MCF 10A (cell line): ENCODE measurements at regions of chr3 and their contacts with region 1.

Region 1: DNA sequence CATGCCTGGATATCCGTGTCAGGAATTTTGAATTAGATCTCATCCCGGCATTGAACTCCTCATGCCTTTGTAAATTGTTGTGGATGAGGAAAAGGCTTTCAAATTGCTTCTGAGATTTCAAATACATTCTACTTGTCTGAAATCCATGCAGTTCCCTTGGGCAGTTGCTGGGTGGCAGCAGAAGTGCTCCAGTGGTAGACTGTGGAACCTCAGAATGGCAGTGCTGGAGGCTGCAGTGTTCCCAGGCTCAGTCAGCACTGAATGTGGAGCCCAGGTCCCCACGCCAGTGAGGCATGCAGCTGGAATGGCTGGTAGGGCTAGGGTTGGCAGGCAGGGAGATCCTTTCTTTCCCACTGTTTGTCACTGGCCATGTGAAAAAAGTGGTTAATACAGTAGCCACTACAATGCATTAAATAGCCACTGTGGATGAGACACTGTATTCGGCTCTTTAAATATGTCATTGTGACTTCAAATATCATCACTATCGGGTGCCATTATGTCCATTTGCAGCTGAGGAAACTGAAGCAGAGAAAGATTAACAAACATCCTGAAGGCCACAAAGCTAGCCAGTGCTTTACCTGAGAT is 98.6 kb downstream of the TPRG1 start:
- DNase-seq: peak; percentile 88
- H3K4me3 Mint-ChIP-seq: no peak overlapping the region
- H3K27ac Mint-ChIP-seq: peak overlapping the region; percentile 87
- H3K4me1 Mint-ChIP-seq: peaks cover 56% of the 10 kb centered on the region
- H3K27me3 Mint-ChIP-seq: no peaks in the 10 kb centered on the region
- CTCF ChIP-seq: peak; percentile 85

Region 2: GRCh38 chr3:188164248-188164687 is 1106.1 kb before region 1 on chr3:
- CTCF ChIA-PET with region 1: no interaction called
- POLR2A ChIA-PET with region 1: no interaction called
- intact Hi-C with region 1: no loop called
- DNase-seq: peak; percentile 50
- H3K4me3 Mint-ChIP-seq: no peak overlapping the region
- H3K27ac Mint-ChIP-seq: no peak overlapping the region
- H3K4me1 Mint-ChIP-seq: peaks cover 28% of the 10 kb centered on the region
- H3K27me3 Mint-ChIP-seq: no peaks in the 10 kb centered on the region
- CTCF ChIP-seq: no peak

Region 3: GRCh38 chr3:189123595-189124387 is 146.5 kb before region 1 on chr3:
- CTCF ChIA-PET with region 1: no interaction called
- POLR2A ChIA-PET with region 1: no interaction called
- intact Hi-C with region 1: no loop called
- DNase-seq: no peak
- H3K4me3 Mint-ChIP-seq: no peak overlapping the region
- H3K27ac Mint-ChIP-seq: no peak overlapping the region
- H3K4me1 Mint-ChIP-seq: no peaks in the 10 kb centered on the region
- H3K27me3 Mint-ChIP-seq: no peaks in the 10 kb centered on the region
- CTCF ChIP-seq: no peak

Region 4: GRCh38 chr3:189304446-189305351 is 34.4 kb after region 1 on chr3:
- CTCF ChIA-PET with region 1: interaction called, 94 read pairs
- POLR2A ChIA-PET with region 1: interaction called, 495 read pairs
- intact Hi-C with region 1: no loop called
- DNase-seq: peak; percentile 96
- H3K4me3 Mint-ChIP-seq: peak overlapping the region; percentile 65
- H3K27ac Mint-ChIP-seq: peak overlapping the region; percentile 99
- H3K4me1 Mint-ChIP-seq: peaks cover 59% of the 10 kb centered on the region
- H3K27me3 Mint-ChIP-seq: no peaks in the 10 kb centered on the region
- CTCF ChIP-seq: no peak

Region 5: GRCh38 chr3:189394599-189395121 is 124.3 kb after region 1 on chr3:
- CTCF ChIA-PET with region 1: interaction called, 14 read pairs
- POLR2A ChIA-PET with region 1: interaction called, 39 read pairs
- intact Hi-C with region 1: loop called (anchors 1 kb)
- DNase-seq: no peak
- H3K4me3 Mint-ChIP-seq: no peak overlapping the region
- H3K27ac Mint-ChIP-seq: no peak overlapping the region
- H3K4me1 Mint-ChIP-seq: peaks cover 32% of the 10 kb centered on the region
- H3K27me3 Mint-ChIP-seq: no peaks in the 10 kb centered on the region
- CTCF ChIP-seq: no peak

Region 6: DNA sequence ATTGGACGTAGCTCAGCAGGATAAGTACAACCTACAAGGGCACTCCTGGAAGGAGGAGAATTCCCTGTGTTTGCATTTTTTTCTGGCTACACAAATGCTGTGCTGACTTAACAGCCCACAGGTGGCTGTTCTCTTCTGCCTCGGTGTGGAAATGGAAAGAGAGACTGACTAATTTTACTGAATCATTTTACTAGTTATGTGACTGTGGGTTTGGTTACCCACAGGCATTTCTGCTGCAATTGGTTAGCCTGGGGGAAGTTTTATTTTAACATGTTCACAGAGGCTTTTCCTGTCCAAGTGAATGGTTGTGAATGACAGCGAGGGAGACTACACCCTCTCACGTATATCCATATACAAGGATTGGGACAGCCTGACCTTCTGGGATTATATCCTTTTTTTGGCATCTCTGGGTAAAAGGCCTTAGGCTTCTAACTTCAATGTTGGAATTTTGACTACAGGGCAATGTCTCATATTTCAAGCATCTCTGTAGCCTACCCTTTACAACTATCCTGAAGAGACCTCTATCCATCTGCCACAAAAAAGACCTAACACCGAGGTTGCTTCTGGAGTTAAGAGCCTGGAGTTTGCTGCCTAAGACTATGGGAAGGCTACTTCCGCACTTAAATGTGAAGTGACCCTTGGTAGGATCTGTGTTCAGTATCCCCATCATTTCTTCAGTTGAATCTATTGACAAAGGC is 293.7 kb after region 1 on chr3:
- CTCF ChIA-PET with region 1: interaction called, 8 read pairs
- POLR2A ChIA-PET with region 1: interaction called, 25 read pairs
- intact Hi-C with region 1: loop called (anchors 1 kb)
- DNase-seq: peak; percentile 92
- H3K4me3 Mint-ChIP-seq: no peak overlapping the region
- H3K27ac Mint-ChIP-seq: peak overlapping the region; percentile 69
- H3K4me1 Mint-ChIP-seq: peaks cover 26% of the 10 kb centered on the region
- H3K27me3 Mint-ChIP-seq: no peaks in the 10 kb centered on the region
- CTCF ChIP-seq: no peak

Region 7: GRCh38 chr3:189792101-189792500 is 521.8 kb after region 1 on chr3:
- CTCF ChIA-PET with region 1: interaction called, 17 read pairs
- POLR2A ChIA-PET with region 1: interaction called, 64 read pairs
- intact Hi-C with region 1: loop called (anchors 1 kb)
- DNase-seq: peak; percentile 59
- H3K4me3 Mint-ChIP-seq: peak overlapping the region; percentile 76
- H3K27ac Mint-ChIP-seq: peak overlapping the region; percentile 99
- H3K4me1 Mint-ChIP-seq: peaks cover 19% of the 10 kb centered on the region
- H3K27me3 Mint-ChIP-seq: no peaks in the 10 kb centered on the region
- CTCF ChIP-seq: no peak

Region 8: GRCh38 chr3:189862390-189863023 is 592.2 kb after region 1 on chr3:
- CTCF ChIA-PET with region 1: interaction called, 4 read pairs
- POLR2A ChIA-PET with region 1: interaction called, 10 read pairs
- intact Hi-C with region 1: no loop called
- DNase-seq: peak; percentile 95
- H3K4me3 Mint-ChIP-seq: peak overlapping the region; percentile 35
- H3K27ac Mint-ChIP-seq: peak overlapping the region; percentile 96
- H3K4me1 Mint-ChIP-seq: peaks cover 21% of the 10 kb centered on the region
- H3K27me3 Mint-ChIP-seq: no peaks in the 10 kb centered on the region
- CTCF ChIP-seq: no peak

Region 9: GRCh38 chr3:189961525-189962161 is 691.3 kb after region 1 on chr3:
- CTCF ChIA-PET with region 1: interaction called, 17 read pairs
- POLR2A ChIA-PET with region 1: interaction called, 3 read pairs
- intact Hi-C with region 1: no loop called
- DNase-seq: peak; percentile 88
- H3K4me3 Mint-ChIP-seq: no peak overlapping the region
- H3K27ac Mint-ChIP-seq: no peak overlapping the region
- H3K4me1 Mint-ChIP-seq: peaks cover 7% of the 10 kb centered on the region
- H3K27me3 Mint-ChIP-seq: no peaks in the 10 kb centered on the region
- CTCF ChIP-seq: peak; percentile 91